SK-N-SH (cell line): ENCODE measurements at regions of chr18 and their contacts with region 1.

Region 1: GRCh38 chr18:42053188-42053781 is 98.3 kb downstream of the PIK3C3 start:
- DNase-seq: peak; percentile 36
- H3K4me3 ChIP-seq: no peak overlapping the region; a peak in 1 of 4 replicates
- H3K27ac ChIP-seq: peak overlapping the region in 1 of 2 experiments; percentile 53; a peak in 2 of 4 replicates
- H3K4me1 ChIP-seq: peaks cover 0 to 5% of the 10 kb centered on the region in 2 experiments; a peak in 2 of 4 replicates
- H3K27me3 ChIP-seq: no peaks in the 10 kb centered on the region
- CTCF ChIP-seq: peak; percentile 95
- EP300 ChIP-seq: no peak
- RAD21 ChIP-seq: peak; percentile 77

Region 2: GRCh38 chr18:42011053-42011452 is 42.2 kb before region 1 on chr18:
- CTCF ChIA-PET with region 1: interaction called, 10 read pairs
- POLR2A ChIA-PET with region 1: no interaction called
- DNase-seq: no peak
- H3K4me3 ChIP-seq: no peak overlapping the region
- H3K27ac ChIP-seq: no peak overlapping the region
- H3K4me1 ChIP-seq: no peaks in the 10 kb centered on the region
- H3K27me3 ChIP-seq: no peaks in the 10 kb centered on the region
- CTCF ChIP-seq: no peak
- EP300 ChIP-seq: no peak
- RAD21 ChIP-seq: no peak

Region 3: GRCh38 chr18:42038936-42039335 is 14.3 kb before region 1 on chr18:
- CTCF ChIA-PET with region 1: interaction called, 22 read pairs
- POLR2A ChIA-PET with region 1: no interaction called
- DNase-seq: no peak
- H3K4me3 ChIP-seq: no peak overlapping the region
- H3K27ac ChIP-seq: peak overlapping the region; percentile 75 to 81; a peak in 3 of 4 replicates
- H3K4me1 ChIP-seq: peaks cover 3 to 15% of the 10 kb centered on the region in 2 experiments; a peak in 2 of 4 replicates
- H3K27me3 ChIP-seq: no peaks in the 10 kb centered on the region
- CTCF ChIP-seq: no peak
- EP300 ChIP-seq: peak in 1 of 2 experiments; percentile 21; a peak in 1 of 4 replicates
- RAD21 ChIP-seq: no peak

Region 4: DNA sequence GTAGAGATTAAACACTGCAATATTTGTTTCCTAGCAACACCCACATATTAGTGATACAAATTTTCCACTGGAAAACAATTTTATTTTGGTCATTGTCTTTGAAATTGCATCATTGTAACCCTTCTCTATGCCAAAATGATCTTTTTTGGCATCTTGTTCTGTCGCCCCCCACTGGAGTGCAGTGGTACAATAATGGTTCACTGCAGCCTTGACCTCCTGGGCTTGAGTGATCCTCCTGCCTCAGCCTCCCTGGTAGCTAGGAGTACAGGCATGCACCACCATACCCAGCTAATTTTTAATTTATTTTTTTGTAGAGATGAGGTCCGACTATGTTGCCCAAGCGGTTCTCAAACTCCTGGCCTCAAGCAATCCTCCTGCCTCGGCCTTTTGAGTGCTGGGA is 19.1 kb after region 1 on chr18:
- CTCF ChIA-PET with region 1: interaction called, 14 read pairs
- POLR2A ChIA-PET with region 1: no interaction called
- DNase-seq: no peak
- H3K4me3 ChIP-seq: no peak overlapping the region
- H3K27ac ChIP-seq: no peak overlapping the region
- H3K4me1 ChIP-seq: no peaks in the 10 kb centered on the region
- H3K27me3 ChIP-seq: no peaks in the 10 kb centered on the region
- CTCF ChIP-seq: peak; percentile 40
- EP300 ChIP-seq: no peak
- RAD21 ChIP-seq: no peak

Region 5: DNA sequence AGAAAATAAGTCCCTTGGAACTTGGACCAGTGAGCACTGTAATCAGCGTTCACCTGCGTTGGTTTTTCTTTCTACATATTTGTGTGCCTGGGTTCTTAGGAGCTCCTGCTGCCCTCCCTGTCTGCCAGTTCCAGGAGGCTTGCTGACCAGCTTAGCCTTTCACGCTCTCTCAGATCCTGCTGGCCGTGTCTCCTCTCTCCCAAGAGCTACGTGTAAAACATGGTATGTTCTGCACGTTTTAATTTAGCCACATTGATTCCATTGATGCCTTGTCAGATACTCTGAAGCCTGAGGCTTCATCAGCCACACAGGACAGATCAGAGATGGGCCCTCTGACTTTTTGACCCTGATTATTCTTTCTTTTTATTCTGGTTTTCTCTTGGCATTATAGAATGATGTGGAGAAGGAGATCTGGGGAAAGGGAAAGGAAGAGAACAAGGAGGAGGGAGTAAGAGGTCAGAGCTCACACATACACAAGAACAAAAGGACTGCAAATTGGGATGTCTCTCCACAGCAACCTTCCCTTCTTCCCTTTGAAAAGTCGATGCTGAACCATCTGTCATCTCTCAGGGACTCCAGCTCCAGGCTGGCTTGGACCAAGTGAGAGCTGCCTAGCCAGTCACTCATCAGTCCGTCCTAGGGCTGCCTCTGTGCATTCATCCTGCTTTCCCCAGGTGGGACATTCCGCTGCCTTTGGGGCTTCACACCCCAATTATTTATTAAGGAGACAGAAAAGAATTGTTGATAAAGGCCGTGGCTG is 54.6 kb after region 1 on chr18:
- CTCF ChIA-PET with region 1: interaction called, 12 read pairs
- POLR2A ChIA-PET with region 1: no interaction called
- DNase-seq: no peak
- H3K4me3 ChIP-seq: no peak overlapping the region
- H3K27ac ChIP-seq: no peak overlapping the region; a peak in 1 of 4 replicates
- H3K4me1 ChIP-seq: peaks cover 0 to 4% of the 10 kb centered on the region in 2 experiments; a peak in 1 of 4 replicates
- H3K27me3 ChIP-seq: no peaks in the 10 kb centered on the region
- CTCF ChIP-seq: no peak
- EP300 ChIP-seq: no peak
- RAD21 ChIP-seq: no peak

Region 6: DNA sequence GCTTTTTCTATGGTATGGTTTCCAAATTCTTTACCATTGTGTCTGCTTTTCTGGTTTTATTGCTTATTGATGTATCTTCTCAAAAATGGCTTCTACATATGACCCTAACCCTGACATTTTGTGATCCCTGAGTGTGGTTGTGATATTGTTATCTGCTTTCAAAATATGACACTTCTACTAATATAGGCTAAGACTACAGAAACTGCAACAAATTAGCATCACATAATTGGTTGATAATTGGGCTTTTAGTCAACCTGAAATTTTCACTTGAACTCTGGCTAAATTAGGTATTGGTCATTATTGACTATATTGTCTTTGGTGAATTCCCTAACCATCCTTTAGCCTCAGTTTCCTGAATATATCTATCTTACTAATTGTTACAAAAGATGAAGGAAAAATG is 147.9 kb after region 1 on chr18:
- CTCF ChIA-PET with region 1: no interaction called
- POLR2A ChIA-PET with region 1: no interaction called
- DNase-seq: no peak
- H3K4me3 ChIP-seq: no peak overlapping the region
- H3K27ac ChIP-seq: no peak overlapping the region
- H3K4me1 ChIP-seq: no peaks in the 10 kb centered on the region; a peak in 1 of 4 replicates
- H3K27me3 ChIP-seq: no peaks in the 10 kb centered on the region
- CTCF ChIP-seq: no peak
- EP300 ChIP-seq: no peak
- RAD21 ChIP-seq: no peak

Region 7: GRCh38 chr18:43563780-43564179 is 1510.5 kb after region 1 on chr18:
- CTCF ChIA-PET with region 1: interaction called, 21 read pairs
- POLR2A ChIA-PET with region 1: no interaction called
- DNase-seq: peak; percentile 40
- H3K4me3 ChIP-seq: no peak overlapping the region
- H3K27ac ChIP-seq: no peak overlapping the region
- H3K4me1 ChIP-seq: no peaks in the 10 kb centered on the region; a peak in 1 of 4 replicates
- H3K27me3 ChIP-seq: no peaks in the 10 kb centered on the region
- CTCF ChIP-seq: peak; percentile 67
- EP300 ChIP-seq: no peak
- RAD21 ChIP-seq: peak; percentile 96

Region 8: DNA sequence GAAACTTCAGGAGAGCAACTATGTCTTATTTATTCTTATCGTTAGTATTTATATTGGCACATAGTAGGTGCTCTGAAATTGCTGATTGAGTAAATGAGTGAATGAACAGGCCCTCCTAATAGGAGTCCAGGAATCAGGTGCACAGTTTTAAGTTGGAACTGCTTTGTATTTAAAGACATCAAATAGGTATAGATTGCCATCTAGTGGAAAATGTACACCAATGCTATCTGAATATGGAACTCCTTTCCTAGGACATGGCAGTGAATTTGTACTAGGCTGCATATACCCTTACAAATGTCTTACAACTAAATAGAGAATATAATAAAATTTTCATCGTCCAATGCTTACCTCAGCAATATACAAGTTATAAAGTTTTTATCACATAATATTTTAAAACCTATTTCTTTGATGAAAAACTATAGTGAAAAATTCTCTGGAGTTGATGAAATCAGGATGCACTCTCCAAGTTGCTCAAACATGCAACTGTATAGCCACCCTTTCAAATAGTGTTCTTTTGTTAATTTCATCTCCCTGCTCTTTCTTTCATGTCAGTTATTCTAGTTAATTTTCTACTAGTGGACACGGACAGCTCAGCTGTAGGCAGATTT is 1542.9 kb after region 1 on chr18:
- CTCF ChIA-PET with region 1: interaction called, 10 read pairs
- POLR2A ChIA-PET with region 1: no interaction called
- DNase-seq: peak; percentile 61
- H3K4me3 ChIP-seq: no peak overlapping the region; a peak in 1 of 4 replicates
- H3K27ac ChIP-seq: no peak overlapping the region
- H3K4me1 ChIP-seq: no peaks in the 10 kb centered on the region; a peak in 2 of 4 replicates
- H3K27me3 ChIP-seq: no peaks in the 10 kb centered on the region
- CTCF ChIP-seq: peak; percentile 70
- EP300 ChIP-seq: no peak
- RAD21 ChIP-seq: peak; percentile 79